Adrenal gland (tissue), 19 donors: ENCODE measurements at regions of chr9 and their contacts with region 1.

Region 1: DNA sequence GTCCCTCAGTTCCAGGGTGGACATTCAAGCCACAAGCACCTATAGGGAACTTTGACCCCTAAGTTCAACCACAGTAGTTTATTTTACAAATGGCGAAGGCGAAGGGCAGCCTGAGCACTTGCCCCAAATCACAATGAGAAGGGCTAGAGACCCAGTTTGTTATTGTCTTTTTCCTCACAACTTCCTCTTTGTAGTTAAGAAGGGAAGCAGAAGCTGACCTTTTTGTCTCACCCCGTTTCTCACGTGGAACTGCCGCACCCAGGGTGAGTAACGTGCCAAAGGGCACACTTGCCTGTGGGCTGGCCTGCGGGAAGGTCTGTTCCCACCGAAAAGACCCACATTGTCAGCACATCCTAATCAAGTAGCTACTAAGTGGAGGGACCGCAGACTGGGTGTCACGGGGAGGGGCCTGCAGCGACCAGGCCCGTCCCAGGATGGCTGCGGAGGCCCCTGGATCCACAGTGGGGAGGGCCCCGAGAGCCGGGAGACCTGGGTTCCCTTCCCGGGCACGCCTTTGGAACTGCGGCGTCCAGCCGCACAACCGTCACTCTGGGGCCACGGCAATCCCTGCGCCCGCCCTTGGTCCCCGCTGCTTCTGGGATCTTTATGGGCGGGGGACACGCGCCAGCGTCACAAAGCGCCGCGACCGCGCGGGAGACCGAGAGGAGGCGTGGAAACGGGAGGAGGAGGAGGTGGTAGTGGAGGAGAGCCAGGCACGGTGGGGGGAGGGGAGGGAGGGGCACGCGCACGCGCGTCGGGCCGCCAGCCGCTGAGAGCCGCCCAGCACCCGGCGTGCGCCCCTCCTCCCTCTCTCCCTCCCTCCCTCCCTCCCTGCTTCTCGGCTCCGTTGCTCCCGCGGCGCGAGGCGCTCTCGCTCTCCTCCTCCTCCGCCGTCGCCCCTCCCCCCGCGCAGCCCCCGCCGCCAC is at the start of gene UBE2R2:
- DNase-seq: peak; percentile 92 to 96 (median 94)
- H3K4me3 ChIP-seq: peak within 1 kb of the TSS; percentile 78 to 92 (median 84)
- H3K27ac ChIP-seq: peak within 1 kb of the TSS; percentile 88 to 99 (median 98)
- H3K4me1 ChIP-seq: peaks cover 32 to 58% of the 10 kb centered on the region in 2 donors
- H3K27me3 ChIP-seq: no peaks in the 10 kb centered on the region
- CTCF ChIP-seq: peak in 1 of 6 experiments; percentile 7
- POLR2A ChIP-seq: peak; percentile 63 to 83
- total RNA-seq, gene UBE2R2: 18.7 to 46.7 (median 27.2) TPM

Region 2: DNA sequence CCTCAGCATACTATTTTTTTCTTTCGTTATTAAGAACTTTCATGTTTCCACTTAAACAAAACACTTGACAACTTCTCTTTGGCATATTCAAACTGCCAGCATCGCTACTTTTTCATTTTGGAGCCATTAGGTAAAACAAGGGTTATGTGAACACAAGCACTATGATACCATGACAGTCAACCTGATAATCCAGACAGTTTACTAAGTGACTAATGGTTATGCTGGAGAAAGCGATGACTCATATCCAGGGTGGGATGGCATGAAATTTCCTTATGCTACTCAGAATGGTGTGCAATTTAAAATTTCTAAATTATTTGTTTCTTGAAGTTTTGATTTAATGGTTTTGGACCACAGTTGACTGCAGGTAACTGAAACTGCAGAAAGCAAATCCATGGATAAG is 51.2 kb before region 1 on chr9:
- intact Hi-C with region 1: no loop called
- DNase-seq: no peak
- H3K4me3 ChIP-seq: no peak overlapping the region
- H3K27ac ChIP-seq: no peak overlapping the region
- H3K4me1 ChIP-seq: no peaks in the 10 kb centered on the region
- H3K27me3 ChIP-seq: no peaks in the 10 kb centered on the region
- CTCF ChIP-seq: no peak
- POLR2A ChIP-seq: no peak

Region 3: GRCh38 chr9:33852216-33852826 is 35.7 kb after region 1 on chr9:
- intact Hi-C with region 1: loop called in 1 of 2 experiments (anchors 5 kb)
- DNase-seq: peak; percentile 71 to 93 (median 80)
- H3K4me3 ChIP-seq: no peak overlapping the region
- H3K27ac ChIP-seq: peak overlapping the region in 1 of 5 donors; percentile 39
- H3K4me1 ChIP-seq: peaks cover 23 to 54% of the 10 kb centered on the region in 2 donors
- H3K27me3 ChIP-seq: no peaks in the 10 kb centered on the region
- CTCF ChIP-seq: peak; percentile 40 to 85 (median 78)
- POLR2A ChIP-seq: no peak